CD4-positive, alpha-beta memory T cell (primary cell): ENCODE measurements at regions of chr6 and their contacts with region 1.

Region 1: DNA sequence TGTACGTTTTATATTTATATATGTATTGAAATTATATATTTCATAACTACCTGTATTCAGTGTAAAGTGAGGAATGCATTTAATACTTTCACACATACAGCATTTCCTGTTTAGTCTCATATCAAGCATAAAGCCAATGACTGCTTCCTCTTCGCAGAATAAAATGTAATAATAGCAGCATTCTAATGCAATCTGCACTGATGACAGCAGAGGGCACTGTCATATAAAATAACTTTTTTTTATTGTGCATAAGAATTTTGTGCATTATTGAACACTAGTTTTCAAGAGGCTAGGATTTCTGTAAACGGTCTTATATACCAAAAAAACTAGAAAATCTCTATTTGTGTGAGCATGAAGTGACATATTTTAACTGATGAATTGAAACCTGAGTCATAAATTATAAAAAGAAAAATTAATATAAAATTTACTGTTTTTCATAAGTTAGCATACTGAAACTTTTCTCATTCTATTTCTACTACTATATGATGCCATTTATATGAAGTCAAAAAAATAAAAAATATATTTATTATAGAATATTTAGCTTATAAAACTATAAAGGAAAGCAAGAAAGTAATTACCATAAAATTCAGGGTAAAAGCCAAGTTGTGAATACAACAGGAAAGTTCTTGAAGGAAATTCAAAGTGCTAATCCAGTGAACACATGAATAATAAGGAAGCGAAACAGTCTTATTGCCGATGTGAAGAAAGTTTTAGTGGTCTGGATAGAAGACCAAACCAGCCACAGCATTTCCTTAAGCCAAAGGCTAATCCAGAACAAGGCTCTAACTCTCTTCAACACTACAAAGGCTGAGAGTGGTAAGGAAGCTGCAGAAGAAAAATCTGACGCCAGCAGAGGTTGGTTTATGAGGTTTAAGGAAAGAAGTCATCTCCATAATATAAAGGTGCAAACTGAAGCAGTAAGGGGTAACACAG is 36.3 kb downstream of the RNF146 start:
- DNase-seq: peak; percentile 31 to 55 (median 51)
- H3K4me3 ChIP-seq: no peak overlapping the region
- H3K4me3 Mint-ChIP-seq: no peak overlapping the region
- H3K27ac ChIP-seq: no peak overlapping the region
- H3K27ac Mint-ChIP-seq: peak overlapping the region in 1 of 7 donors; percentile 6
- H3K4me1 ChIP-seq: no peaks in the 10 kb centered on the region
- H3K4me1 Mint-ChIP-seq: peaks cover 22 to 43% (median 30%) of the 10 kb centered on the region in 4 donors
- H3K27me3 ChIP-seq: no peaks in the 10 kb centered on the region
- H3K27me3 Mint-ChIP-seq: no peaks in the 10 kb centered on the region

Region 2: GRCh38 chr6:127291495-127291894 is 11.5 kb before region 1 on chr6:
- CTCF ChIA-PET with region 1: interaction called, 56 read pairs
- POLR2A ChIA-PET with region 1: interaction called, 5 read pairs
- intact Hi-C with region 1: no loop called
- DNase-seq: peak in 2 of 5 donors; percentile 2 to 12
- H3K4me3 ChIP-seq: no peak overlapping the region
- H3K4me3 Mint-ChIP-seq: peak overlapping the region; percentile 66 to 91 (median 74)
- H3K27ac ChIP-seq: no peak overlapping the region
- H3K27ac Mint-ChIP-seq: peak overlapping the region; percentile 40 to 89 (median 75)
- H3K4me1 ChIP-seq: peaks cover 18% of the 10 kb centered on the region
- H3K4me1 Mint-ChIP-seq: peaks cover 24 to 37% (median 36%) of the 10 kb centered on the region in 4 donors
- H3K27me3 ChIP-seq: no peaks in the 10 kb centered on the region
- H3K27me3 Mint-ChIP-seq: no peaks in the 10 kb centered on the region

Region 3: DNA sequence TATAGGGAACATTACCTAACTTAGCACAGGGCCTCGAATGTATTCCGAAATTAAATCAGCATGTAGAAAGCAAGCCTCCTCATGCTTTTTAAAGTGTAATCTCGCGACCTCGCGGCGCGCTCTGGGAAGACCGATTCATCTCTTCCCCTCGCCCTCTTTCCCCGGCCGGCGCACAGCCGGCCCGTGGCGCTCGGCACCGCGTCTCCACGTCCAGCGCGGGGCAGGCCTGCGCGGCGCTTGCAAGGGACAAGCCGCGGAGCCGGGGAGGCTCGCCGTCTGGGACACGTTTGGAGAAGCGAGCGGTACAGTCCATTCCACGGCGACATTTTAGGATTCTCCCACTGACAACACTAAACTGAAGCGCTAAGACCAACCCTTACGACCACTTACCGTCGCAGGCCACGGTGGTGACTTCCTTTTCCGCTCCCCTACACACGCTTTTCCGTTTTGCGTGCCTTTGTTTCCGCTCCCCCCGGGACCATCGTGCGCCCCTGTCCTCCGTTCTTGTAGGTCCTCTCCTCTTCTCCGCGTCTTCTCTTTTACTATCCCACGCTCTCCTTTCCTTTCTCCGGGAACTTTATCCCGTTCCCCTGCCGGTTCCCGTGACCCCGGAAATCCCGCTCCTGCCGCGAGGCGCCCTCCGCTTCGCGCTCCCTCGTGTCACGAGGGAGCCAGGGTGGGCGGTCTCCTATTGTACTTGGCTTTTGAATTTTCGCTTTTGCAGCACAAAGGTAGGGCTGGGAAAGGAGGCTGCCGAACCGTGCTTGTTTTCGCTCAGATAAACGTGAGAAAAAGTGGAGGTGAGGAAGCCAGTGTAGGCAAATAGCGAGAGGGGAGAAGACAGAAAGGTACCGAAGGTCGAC is 40.2 kb after region 1 on chr6 and contains the start of gene ECHDC1:
- CTCF ChIA-PET with region 1: interaction called, 4 read pairs
- POLR2A ChIA-PET with region 1: interaction called, 4 read pairs
- intact Hi-C with region 1: loop called (anchors 2 kb)
- DNase-seq: peak; percentile 65 to 71 (median 69)
- H3K4me3 ChIP-seq: peak within 1 kb of the TSS; percentile 70 to 97
- H3K4me3 Mint-ChIP-seq: no peak within 1 kb of the TSS
- H3K27ac ChIP-seq: peak within 1 kb of the TSS; percentile 65
- H3K27ac Mint-ChIP-seq: no peak within 1 kb of the TSS
- H3K4me1 ChIP-seq: peaks cover 52% of the 10 kb centered on the region
- H3K4me1 Mint-ChIP-seq: peaks cover 4 to 18% (median 12%) of the 10 kb centered on the region in 4 donors
- H3K27me3 ChIP-seq: no peaks in the 10 kb centered on the region
- H3K27me3 Mint-ChIP-seq: no peaks in the 10 kb centered on the region
- total RNA-seq, gene ECHDC1: 35.5 to 39.3 TPM

Region 4: DNA sequence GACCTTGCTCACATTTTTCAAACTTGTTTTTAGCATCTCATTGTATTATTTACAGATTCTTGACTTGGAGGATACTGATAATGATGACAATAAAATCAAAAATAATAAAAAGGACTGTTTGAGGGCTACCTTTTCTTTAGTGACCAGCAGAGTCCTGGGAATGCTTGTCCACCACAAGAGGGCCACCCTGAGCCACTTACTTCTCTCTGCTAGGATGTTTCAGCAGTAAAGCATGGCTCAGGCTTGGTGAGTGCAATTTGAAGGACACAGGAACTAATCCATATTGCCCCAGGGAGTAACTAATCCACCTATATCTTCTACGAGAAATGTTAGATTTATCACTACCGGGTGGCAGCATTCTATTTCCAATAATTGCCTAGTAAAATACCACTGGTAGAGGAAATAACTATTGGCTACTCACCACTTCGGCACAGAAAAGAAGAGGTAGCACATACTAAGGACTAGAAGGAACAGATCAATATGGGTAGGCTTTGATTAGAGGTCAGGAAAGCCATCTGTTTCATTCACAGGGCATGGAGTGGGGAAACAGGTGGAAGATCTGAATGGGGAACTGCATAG is 162.0 kb after region 1 on chr6:
- CTCF ChIA-PET with region 1: interaction called, 9 read pairs
- POLR2A ChIA-PET with region 1: no interaction called
- intact Hi-C with region 1: loop called (anchors 5 kb)
- DNase-seq: peak; percentile 29 to 50 (median 45)
- H3K4me3 ChIP-seq: no peak overlapping the region
- H3K4me3 Mint-ChIP-seq: no peak overlapping the region
- H3K27ac ChIP-seq: no peak overlapping the region
- H3K27ac Mint-ChIP-seq: no peak overlapping the region
- H3K4me1 ChIP-seq: no peaks in the 10 kb centered on the region
- H3K4me1 Mint-ChIP-seq: peaks cover 0 to 2% (median 0%) of the 10 kb centered on the region in 4 donors
- H3K27me3 ChIP-seq: no peaks in the 10 kb centered on the region
- H3K27me3 Mint-ChIP-seq: no peaks in the 10 kb centered on the region

Region 5: DNA sequence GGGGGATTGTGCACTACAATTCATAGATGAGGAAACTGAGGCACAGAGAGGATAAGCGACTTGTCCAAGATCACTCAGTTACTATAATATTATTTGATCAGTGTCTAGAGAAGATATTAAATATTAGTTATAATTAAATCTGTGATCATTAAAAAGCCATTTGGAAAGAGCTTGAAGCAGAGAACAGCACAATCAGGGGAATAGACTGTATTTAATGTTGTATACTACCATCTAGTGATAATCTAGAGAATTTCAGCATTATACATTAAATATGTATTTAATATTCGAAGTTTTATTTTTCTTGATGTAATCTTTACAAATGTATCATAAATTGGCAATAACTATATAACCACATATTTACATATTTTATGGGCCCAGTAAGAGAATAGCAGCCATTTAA is 236.3 kb after region 1 on chr6:
- CTCF ChIA-PET with region 1: interaction called, 39 read pairs
- POLR2A ChIA-PET with region 1: no interaction called
- intact Hi-C with region 1: loop called (anchors 1 kb)
- DNase-seq: peak in 4 of 5 donors; percentile 15 to 36 (median 22)
- H3K4me3 ChIP-seq: no peak overlapping the region
- H3K4me3 Mint-ChIP-seq: no peak overlapping the region
- H3K27ac ChIP-seq: no peak overlapping the region
- H3K27ac Mint-ChIP-seq: no peak overlapping the region
- H3K4me1 ChIP-seq: no peaks in the 10 kb centered on the region
- H3K4me1 Mint-ChIP-seq: no peaks in the 10 kb centered on the region
- H3K27me3 ChIP-seq: no peaks in the 10 kb centered on the region
- H3K27me3 Mint-ChIP-seq: peaks cover 7 to 13% of the 10 kb centered on the region in 2 donors